Heart left ventricle (tissue), 16 donors: ENCODE measurements at regions of chr2 and their contacts with region 1.

Region 1: GRCh38 chr2:64228126-64228678 is 84.0 kb upstream of the PELI1 start:
- DNase-seq: peak; percentile 86 to 94 (median 87)
- ATAC-seq: peak; percentile 94 to 99 (median 98)
- H3K4me3 ChIP-seq: peak overlapping the region; percentile 14 to 62 (median 50)
- H3K27ac ChIP-seq: peak overlapping the region; percentile 21 to 88 (median 78)
- H3K4me1 ChIP-seq: peaks cover 0 to 27% (median 15%) of the 10 kb centered on the region in 12 donors
- H3K27me3 ChIP-seq: no peaks in the 10 kb centered on the region
- CTCF ChIP-seq: peak in 3 of 12 donors; percentile 10 to 16 (median 13)
- POLR2A ChIP-seq: peak in 1 of 2 donors; percentile 62

Region 2: GRCh38 chr2:64165706-64166105 is 62.5 kb before region 1 on chr2:
- intact Hi-C with region 1: no loop called
- DNase-seq: no peak
- ATAC-seq: no peak
- H3K4me3 ChIP-seq: no peak overlapping the region
- H3K27ac ChIP-seq: no peak overlapping the region
- H3K4me1 ChIP-seq: peaks cover 0 to 26% (median 0%) of the 10 kb centered on the region in 12 donors
- H3K27me3 ChIP-seq: no peaks in the 10 kb centered on the region
- CTCF ChIP-seq: no peak
- POLR2A ChIP-seq: no peak

Region 3: DNA sequence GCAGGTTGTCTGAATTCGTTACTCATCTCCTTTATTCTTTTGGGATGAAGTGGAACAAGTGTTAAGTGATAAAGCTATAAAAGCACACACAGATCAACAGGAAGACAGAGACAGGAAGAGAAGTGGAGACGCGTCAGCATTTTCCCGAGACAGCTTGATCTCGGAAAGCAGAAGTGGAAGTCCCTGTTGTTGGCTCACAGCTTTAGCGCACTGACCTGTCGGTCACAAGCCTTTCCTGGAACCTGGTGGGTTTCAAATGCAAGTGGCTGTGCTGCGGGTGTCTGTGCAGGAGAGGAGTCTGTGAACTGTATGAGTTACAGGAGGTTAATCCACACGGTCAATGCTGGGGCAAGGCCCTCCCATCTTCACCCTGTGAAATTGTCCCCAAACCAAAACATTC is 32.6 kb after region 1 on chr2:
- intact Hi-C with region 1: loop called in 1 of 10 experiments (anchors 5 kb)
- DNase-seq: peak; percentile 61 to 70 (median 64)
- ATAC-seq: peak; percentile 69 to 90 (median 82)
- H3K4me3 ChIP-seq: peak overlapping the region in 1 of 12 donors; percentile 19
- H3K27ac ChIP-seq: peak overlapping the region in 11 of 12 donors; percentile 19 to 86 (median 53)
- H3K4me1 ChIP-seq: peaks cover 0 to 66% (median 20%) of the 10 kb centered on the region in 12 donors
- H3K27me3 ChIP-seq: no peaks in the 10 kb centered on the region
- CTCF ChIP-seq: no peak
- POLR2A ChIP-seq: no peak

Region 4: DNA sequence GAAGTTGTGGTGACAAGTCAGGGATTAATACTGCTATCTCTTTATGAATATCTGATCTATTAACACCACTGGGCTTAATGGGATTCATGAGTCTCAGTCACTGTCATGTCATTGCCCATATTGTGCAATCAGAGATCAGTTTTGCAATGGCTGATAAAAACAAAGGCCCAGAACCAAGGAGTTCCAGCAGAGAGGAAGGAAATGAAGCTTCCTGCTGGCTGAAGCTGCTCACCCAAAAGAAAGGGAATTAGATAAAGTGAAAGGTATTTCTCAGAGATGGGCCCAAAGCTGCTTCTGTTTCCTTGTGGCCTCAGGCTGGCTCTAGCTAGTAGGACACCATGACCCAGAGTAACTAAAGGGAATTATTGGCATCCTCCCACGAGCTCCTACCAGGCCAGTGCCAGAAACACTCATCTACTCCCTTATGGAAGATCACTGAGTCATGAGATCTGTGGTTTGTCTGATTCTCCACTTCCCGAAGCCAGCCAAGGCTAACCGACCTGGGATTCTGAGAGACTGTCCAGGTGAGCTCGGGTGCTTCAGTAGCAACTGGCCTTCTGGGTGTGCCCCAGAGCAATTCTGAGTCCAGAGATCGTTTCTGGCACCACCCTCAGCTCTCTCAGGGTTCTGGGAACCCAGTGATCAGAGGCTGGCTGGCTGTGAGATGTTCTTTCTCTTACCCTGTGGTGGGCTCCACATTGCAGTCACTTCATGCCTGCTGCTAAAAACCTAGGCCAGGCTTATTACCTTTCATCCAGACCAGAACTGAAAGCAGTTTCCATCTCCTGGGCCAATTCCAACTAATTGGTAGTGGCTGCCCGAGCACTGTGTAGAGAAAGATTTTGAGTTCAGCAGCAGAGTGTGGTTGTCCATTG is 45.6 kb after region 1 on chr2:
- intact Hi-C with region 1: loop called in 1 of 10 experiments (anchors 10 kb)
- DNase-seq: peak in 4 of 5 donors; percentile 39 to 52 (median 45)
- ATAC-seq: peak; percentile 85 to 93 (median 92)
- H3K4me3 ChIP-seq: peak overlapping the region in 4 of 12 donors; percentile 13 to 27 (median 16)
- H3K27ac ChIP-seq: peak overlapping the region; percentile 58 to 93 (median 75)
- H3K4me1 ChIP-seq: peaks cover 0 to 56% (median 24%) of the 10 kb centered on the region in 12 donors
- H3K27me3 ChIP-seq: no peaks in the 10 kb centered on the region
- CTCF ChIP-seq: no peak
- POLR2A ChIP-seq: no peak